ENCODE measurements at regions of chr11 and their contacts with region 1.

Region 1: DNA sequence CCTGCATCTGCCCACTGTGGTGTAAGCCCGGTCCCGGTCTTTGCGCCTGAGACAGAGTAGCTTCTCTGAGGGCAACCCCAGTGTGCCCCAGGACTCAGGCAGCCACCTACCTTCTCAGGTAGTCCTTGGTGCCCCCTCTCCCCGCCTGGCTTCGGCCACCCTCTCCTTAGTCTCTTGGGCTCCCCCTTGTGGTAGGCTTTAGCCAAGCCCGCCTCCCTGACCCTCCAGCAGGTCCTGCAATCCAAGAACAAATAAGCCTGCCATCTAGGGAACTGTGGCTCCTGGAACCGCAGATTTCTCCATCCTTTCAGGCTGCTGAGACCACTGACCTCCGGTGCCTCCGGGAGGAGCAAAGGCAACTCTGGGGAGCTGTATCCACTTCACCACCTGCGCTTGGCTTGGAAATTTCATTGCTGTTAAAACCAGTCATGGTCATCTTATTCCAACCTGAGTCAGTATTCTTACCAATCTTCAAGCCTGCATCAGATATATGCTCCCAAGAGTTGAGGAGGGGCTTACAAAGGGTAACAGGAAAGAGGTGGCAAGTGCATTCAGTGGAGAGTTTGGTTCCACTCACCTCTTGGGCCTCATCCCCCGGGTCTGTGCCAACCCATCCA is 52.8 kb upstream of the TENM4 start:
- DNase-seq: peak; percentile 37
- H3K4me3 ChIP-seq: no peak overlapping the region
- H3K27ac ChIP-seq: no peak overlapping the region
- H3K27me3 ChIP-seq: peaks cover 22% of the 10 kb centered on the region
- CTCF ChIP-seq: peak; percentile 92

Region 2: DNA sequence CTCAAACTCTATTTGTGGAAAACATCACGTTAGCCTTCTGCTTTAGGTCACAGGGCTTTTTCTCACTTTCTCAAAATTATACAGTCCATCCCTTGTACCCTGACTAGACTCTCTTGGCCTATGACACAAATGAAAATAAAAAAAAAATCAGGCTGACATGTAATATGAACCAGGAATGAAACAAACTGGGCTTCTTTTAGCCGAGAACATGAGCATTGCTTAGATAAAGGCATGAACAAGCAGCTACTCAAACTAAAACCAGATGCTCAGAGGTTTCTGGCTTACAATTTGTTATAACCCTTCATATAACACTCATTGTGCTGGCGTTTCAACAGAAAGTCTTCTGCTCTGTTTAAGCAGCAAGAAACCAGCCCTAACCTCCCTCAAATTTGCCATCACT is 653.5 kb before region 1 on chr11:
- CTCF ChIA-PET with region 1: no interaction called
- POLR2A ChIA-PET with region 1: no interaction called
- DNase-seq: peak; percentile 78
- H3K4me3 ChIP-seq: no peak overlapping the region; the same call in 1 of the 2 replicates
- H3K27ac ChIP-seq: peak overlapping the region; percentile 94
- H3K27me3 ChIP-seq: no peaks in the 10 kb centered on the region
- CTCF ChIP-seq: no peak

Region 3: DNA sequence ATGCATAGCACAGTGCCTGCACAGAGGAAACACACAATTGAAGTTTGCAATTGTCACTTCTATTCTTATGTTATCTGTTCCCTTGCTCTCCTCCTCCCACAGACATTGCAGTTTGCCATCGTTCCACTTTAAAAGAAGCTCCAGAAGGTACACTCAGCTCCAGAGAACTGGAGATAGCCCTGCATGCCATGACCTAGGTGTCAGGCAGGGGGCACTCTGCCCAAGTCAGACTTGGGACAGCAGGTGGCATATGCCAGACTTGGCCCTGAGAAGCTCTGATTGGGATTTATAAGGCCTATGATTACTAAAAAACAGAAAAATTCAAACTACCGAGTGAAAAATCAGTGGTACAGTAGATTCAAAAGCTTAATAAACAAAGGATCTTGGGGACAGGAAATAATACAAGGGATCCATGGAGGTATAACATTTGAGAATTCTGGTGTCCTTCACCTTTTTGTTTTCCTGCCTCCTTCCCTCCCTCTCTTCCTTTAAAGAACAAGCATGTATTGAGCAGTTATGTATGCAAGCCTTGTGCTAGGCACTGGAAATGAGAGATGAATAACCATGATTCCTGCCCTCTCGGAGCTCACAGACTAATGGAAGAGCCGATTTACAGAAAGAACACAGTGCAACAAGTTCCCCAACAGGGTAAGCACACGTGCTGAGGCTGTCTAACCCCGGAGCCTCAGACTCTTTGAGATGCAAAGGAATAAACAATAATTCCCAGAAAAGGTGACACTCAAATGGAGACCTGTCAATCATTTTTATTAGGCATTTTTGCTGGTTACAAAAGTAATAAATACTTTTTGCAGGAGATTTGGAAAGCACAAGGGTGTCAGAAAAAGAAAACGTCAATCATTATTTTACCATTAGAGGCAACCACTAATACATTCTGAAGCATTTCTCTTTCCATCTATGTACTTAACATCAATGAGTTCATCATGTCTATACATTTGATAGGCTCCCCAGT is 92.7 kb before region 1 on chr11:
- CTCF ChIA-PET with region 1: interaction called, 34 read pairs
- POLR2A ChIA-PET with region 1: no interaction called
- DNase-seq: no peak
- H3K4me3 ChIP-seq: no peak overlapping the region
- H3K27ac ChIP-seq: no peak overlapping the region
- H3K27me3 ChIP-seq: no peaks in the 10 kb centered on the region
- CTCF ChIP-seq: peak; percentile 65

Region 4: GRCh38 chr11:79482800-79483199 is 10.9 kb before region 1 on chr11:
- CTCF ChIA-PET with region 1: interaction called, 21 read pairs
- POLR2A ChIA-PET with region 1: no interaction called
- DNase-seq: no peak
- H3K4me3 ChIP-seq: no peak overlapping the region
- H3K27ac ChIP-seq: no peak overlapping the region
- H3K27me3 ChIP-seq: peaks cover 7% of the 10 kb centered on the region
- CTCF ChIP-seq: no peak

Measured in AG04450 (cell line).